A673 (cell line): ENCODE measurements at regions of chr16 and their contacts with region 1.

Region 1: GRCh38 chr16:2500918-2501750 is 12.6 kb upstream of the ATP6V0C start:
- DNase-seq: peak; percentile 91
- H3K4me3 ChIP-seq: peak overlapping the region; percentile 37
- H3K27ac ChIP-seq: peak overlapping the region; percentile 40
- H3K4me1 ChIP-seq: peaks cover 5% of the 10 kb centered on the region
- H3K27me3 ChIP-seq: no peaks in the 10 kb centered on the region
- CTCF ChIP-seq: peak; percentile 99

Region 2: DNA sequence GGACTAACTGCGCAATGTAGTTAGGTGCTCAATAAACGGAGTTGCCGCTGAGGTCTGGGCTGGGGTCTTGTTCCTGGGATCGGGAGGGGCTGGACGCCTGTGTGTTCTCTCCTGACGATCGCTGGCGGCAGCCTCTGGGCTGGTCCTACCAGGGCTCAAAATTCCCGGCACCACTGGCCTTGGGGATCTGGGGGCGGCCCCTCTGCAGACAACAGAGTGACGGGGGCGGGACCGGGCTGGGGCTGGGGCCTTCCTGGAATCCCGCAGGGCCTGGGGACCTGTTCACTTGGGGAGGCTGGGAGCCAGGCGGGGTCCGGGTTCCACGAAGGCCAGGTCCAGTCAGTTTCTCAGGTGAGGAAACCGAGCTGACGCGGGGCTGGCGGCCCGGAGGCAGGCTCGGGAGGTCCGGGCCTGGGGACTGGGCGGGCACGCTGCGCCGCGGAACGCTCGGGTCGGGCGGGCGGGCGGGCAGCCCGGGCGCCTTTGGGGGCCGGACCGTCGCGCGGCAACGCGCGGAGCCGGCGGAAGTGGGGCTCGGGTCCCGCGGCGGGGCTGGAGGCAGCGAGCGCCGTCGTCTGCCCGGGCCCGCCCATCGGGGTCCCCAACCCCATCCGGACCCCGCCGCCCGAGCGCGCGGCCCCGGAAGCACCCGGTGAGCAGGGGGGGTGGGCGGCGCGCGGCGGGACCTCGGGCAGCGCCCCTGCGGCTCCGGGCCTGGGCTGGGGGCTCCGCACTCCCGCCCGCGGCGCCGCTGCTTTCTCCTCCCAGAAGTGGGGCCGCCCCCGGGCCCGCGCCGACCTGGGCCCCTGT is 1931.5 kb before region 1 on chr16 and contains the start of gene PIGQ:
- CTCF ChIA-PET with region 1: no interaction called
- POLR2A ChIA-PET with region 1: no interaction called
- intact Hi-C with region 1: no loop called
- DNase-seq: peak; percentile 79
- H3K4me3 ChIP-seq: peak within 1 kb of the TSS; percentile 98
- H3K27ac ChIP-seq: peak within 1 kb of the TSS; percentile 87
- H3K4me1 ChIP-seq: peaks cover 11% of the 10 kb centered on the region
- H3K27me3 ChIP-seq: no peaks in the 10 kb centered on the region
- CTCF ChIP-seq: no peak
- total RNA-seq, gene PIGQ: 59.4 and 65.7 TPM in 2 replicates

Region 3: DNA sequence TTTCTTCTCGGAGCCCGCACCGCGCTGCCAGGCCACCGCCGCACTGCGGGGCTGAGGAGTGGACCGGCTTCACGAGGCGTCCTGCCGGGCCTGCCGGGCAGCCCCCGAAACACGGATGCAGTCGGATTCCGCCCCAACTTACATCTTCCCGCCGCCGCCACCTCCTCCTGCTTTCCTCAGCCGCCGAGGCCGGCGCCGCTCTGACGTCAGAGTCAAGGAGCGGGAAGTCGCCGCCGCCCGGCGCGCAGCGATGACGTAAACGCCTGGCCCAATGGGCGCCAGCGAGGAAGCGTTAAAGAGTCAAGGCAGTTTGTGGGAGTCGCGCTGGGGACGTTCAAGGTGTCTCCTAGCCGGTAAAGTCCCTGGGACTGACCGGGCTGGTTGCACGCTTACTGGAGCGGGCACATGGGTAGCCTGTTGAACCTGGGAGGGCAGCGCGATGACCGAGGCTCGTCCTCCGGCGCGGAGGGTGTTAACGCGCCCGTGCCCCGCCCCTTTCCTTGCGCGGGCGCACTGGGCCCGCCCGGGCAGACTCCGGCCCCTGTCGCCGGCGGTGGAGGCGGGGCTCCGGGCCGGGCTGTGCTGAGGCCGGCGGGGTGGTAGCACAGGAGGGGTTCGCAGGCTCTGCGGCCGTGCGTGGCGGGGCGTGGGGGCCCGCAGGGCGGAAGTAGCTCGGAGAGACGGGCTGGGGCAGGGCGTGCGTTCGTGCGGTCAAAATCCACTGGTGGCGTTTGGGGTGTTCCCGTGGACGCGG is 233.0 kb before region 1 on chr16 and contains the start of gene RNPS1:
- CTCF ChIA-PET with region 1: no interaction called
- POLR2A ChIA-PET with region 1: no interaction called
- intact Hi-C with region 1: loop called (anchors 10 kb)
- DNase-seq: peak; percentile 97
- H3K4me3 ChIP-seq: peak within 1 kb of the TSS; percentile 76
- H3K27ac ChIP-seq: peak within 1 kb of the TSS; percentile 96
- H3K4me1 ChIP-seq: peaks cover 13% of the 10 kb centered on the region
- H3K27me3 ChIP-seq: no peaks in the 10 kb centered on the region
- CTCF ChIP-seq: no peak
- total RNA-seq, gene RNPS1: 345 and 365 TPM in 2 replicates

Region 4: DNA sequence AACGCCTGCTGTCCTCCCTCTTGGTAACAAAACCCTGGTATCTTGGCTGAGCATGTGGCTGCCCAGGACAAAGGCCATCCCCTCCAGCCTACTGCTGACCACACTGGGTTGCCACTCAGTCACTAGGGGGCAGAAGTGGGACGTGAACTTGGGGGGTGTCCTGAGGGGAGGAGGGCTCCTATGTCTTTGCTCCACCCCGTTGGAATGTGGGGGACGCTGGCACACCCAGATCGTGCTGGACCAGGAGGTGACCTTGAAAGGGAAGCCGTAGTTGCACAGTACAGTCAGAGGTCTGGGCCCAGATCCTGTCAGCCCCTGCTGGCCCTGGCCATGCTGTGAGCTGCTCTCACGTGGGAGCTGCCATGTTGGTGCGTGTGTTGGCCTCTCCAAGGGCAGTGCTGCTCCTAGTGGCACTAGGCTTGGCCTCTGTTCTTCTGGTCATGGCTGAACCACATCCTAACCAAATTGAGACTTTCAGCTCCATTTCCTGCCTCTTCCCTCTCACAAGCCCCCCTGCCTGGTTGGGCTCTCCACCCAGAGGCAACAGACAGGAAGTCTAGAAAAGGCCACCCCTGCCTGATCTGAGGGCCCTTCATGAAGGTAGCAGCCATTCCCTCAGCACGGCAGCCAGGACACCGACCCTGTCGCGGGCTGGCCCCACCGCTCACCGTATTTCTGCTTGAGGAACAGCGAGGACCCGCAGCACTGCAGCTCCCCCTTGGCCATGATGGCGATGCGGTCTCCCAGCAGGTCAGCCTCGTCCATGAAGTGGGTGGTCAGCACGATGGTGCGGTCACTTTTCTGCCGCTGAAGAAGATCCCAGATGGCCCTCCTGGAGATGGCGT is 204.3 kb before region 1 on chr16:
- CTCF ChIA-PET with region 1: no interaction called
- POLR2A ChIA-PET with region 1: no interaction called
- intact Hi-C with region 1: loop called (anchors 2 kb)
- DNase-seq: peak; percentile 33
- H3K4me3 ChIP-seq: no peak overlapping the region
- H3K27ac ChIP-seq: no peak overlapping the region
- H3K4me1 ChIP-seq: no peaks in the 10 kb centered on the region
- H3K27me3 ChIP-seq: no peaks in the 10 kb centered on the region
- CTCF ChIP-seq: peak; percentile 59

Region 5: GRCh38 chr16:2340564-2341455 is 160.3 kb before region 1 on chr16 and contains the start of gene ABCA3:
- CTCF ChIA-PET with region 1: interaction called, 5 read pairs
- POLR2A ChIA-PET with region 1: no interaction called
- intact Hi-C with region 1: loop called (anchors 5 kb)
- DNase-seq: peak; percentile 96
- H3K4me3 ChIP-seq: peak within 1 kb of the TSS; percentile 75
- H3K27ac ChIP-seq: no peak within 1 kb of the TSS
- H3K4me1 ChIP-seq: no peaks in the 10 kb centered on the region
- H3K27me3 ChIP-seq: peaks cover 34% of the 10 kb centered on the region
- CTCF ChIP-seq: peak; percentile 99
- total RNA-seq, gene ABCA3: 9.0 and 13.7 TPM in 2 replicates

Region 6: GRCh38 chr16:2422123-2422867 is 78.8 kb before region 1 on chr16:
- CTCF ChIA-PET with region 1: no interaction called
- POLR2A ChIA-PET with region 1: no interaction called
- intact Hi-C with region 1: no loop called
- DNase-seq: no peak
- H3K4me3 ChIP-seq: no peak overlapping the region
- H3K27ac ChIP-seq: no peak overlapping the region
- H3K4me1 ChIP-seq: peaks cover 4% of the 10 kb centered on the region
- H3K27me3 ChIP-seq: no peaks in the 10 kb centered on the region
- CTCF ChIP-seq: no peak

Region 7: GRCh38 chr16:2459647-2460390 is 41.3 kb before region 1 on chr16 and contains the start of gene TEDC2:
- CTCF ChIA-PET with region 1: interaction called, 11 read pairs
- POLR2A ChIA-PET with region 1: no interaction called
- intact Hi-C with region 1: no loop called
- DNase-seq: peak; percentile 99
- H3K4me3 ChIP-seq: peak within 1 kb of the TSS; percentile 71
- H3K27ac ChIP-seq: peak within 1 kb of the TSS; percentile 81
- H3K4me1 ChIP-seq: peaks cover 14% of the 10 kb centered on the region
- H3K27me3 ChIP-seq: no peaks in the 10 kb centered on the region
- CTCF ChIP-seq: no peak
- total RNA-seq, gene TEDC2: 48.5 and 51.9 TPM in 2 replicates

Region 8: DNA sequence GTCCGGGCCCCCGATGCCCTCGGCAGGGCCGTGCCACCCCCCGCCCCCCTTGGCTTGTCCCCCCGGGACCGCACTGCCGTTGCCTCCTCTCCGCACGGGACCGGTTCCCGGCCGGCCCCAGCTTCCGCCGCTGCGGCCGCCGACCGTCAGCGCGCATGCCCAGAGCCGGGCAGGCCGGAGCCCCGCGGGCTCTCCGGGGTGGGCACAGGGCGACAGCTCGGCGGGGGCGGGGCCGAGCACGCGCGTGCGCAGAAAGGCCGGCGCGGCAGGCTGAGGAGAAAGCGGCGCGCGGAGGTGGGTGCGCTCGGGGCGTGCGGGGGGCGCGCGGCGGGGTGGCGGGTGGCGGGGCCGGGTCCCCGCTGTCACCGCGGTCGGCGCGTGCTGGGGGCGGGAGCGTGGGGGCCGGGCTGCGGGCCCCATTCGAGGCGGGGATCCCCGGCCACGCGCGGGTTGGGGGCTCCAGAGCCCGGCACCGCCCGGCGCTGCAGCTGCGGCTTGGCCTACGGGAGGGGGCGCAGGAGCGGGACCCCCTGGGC is 26.2 kb before region 1 on chr16 and contains the start of gene TBC1D24:
- CTCF ChIA-PET with region 1: interaction called, 12 read pairs
- POLR2A ChIA-PET with region 1: no interaction called
- intact Hi-C with region 1: no loop called
- DNase-seq: peak; percentile 91
- H3K4me3 ChIP-seq: peak within 1 kb of the TSS; percentile 87
- H3K27ac ChIP-seq: peak within 1 kb of the TSS; percentile 88
- H3K4me1 ChIP-seq: peaks cover 40% of the 10 kb centered on the region
- H3K27me3 ChIP-seq: no peaks in the 10 kb centered on the region
- CTCF ChIP-seq: no peak
- total RNA-seq, gene TBC1D24: 24.2 and 27.1 TPM in 2 replicates

Region 9: GRCh38 chr16:2487903-2488531 is 13.1 kb before region 1 on chr16:
- CTCF ChIA-PET with region 1: interaction called, 10 read pairs
- POLR2A ChIA-PET with region 1: no interaction called
- intact Hi-C with region 1: no loop called
- DNase-seq: no peak
- H3K4me3 ChIP-seq: no peak overlapping the region
- H3K27ac ChIP-seq: no peak overlapping the region
- H3K4me1 ChIP-seq: no peaks in the 10 kb centered on the region
- H3K27me3 ChIP-seq: no peaks in the 10 kb centered on the region
- CTCF ChIP-seq: no peak